A673 (cell line): ENCODE measurements at regions of chr1 and their contacts with region 1.

Region 1: GRCh38 chr1:51217101-51217500 is 19.0 kb upstream of the RNF11 start:
- DNase-seq: no peak
- H3K4me3 ChIP-seq: no peak overlapping the region
- H3K27ac ChIP-seq: no peak overlapping the region
- H3K4me1 ChIP-seq: no peaks in the 10 kb centered on the region
- H3K27me3 ChIP-seq: no peaks in the 10 kb centered on the region
- CTCF ChIP-seq: no peak

Region 2: GRCh38 chr1:50289495-50289894 is 927.6 kb before region 1 on chr1:
- CTCF ChIA-PET with region 1: no interaction called
- POLR2A ChIA-PET with region 1: no interaction called
- intact Hi-C with region 1: no loop called
- DNase-seq: no peak
- H3K4me3 ChIP-seq: no peak overlapping the region
- H3K27ac ChIP-seq: no peak overlapping the region
- H3K4me1 ChIP-seq: no peaks in the 10 kb centered on the region
- H3K27me3 ChIP-seq: no peaks in the 10 kb centered on the region
- CTCF ChIP-seq: no peak

Region 3: GRCh38 chr1:51175278-51175677 is 41.8 kb before region 1 on chr1:
- CTCF ChIA-PET with region 1: no interaction called
- POLR2A ChIA-PET with region 1: interaction called, 12 read pairs
- intact Hi-C with region 1: no loop called
- DNase-seq: no peak
- H3K4me3 ChIP-seq: no peak overlapping the region
- H3K27ac ChIP-seq: no peak overlapping the region
- H3K4me1 ChIP-seq: no peaks in the 10 kb centered on the region
- H3K27me3 ChIP-seq: no peaks in the 10 kb centered on the region
- CTCF ChIP-seq: no peak

Region 4: GRCh38 chr1:51192213-51192843 is 24.8 kb before region 1 on chr1:
- CTCF ChIA-PET with region 1: no interaction called
- POLR2A ChIA-PET with region 1: no interaction called
- intact Hi-C with region 1: no loop called
- DNase-seq: peak; percentile 80
- H3K4me3 ChIP-seq: no peak overlapping the region
- H3K27ac ChIP-seq: no peak overlapping the region
- H3K4me1 ChIP-seq: no peaks in the 10 kb centered on the region
- H3K27me3 ChIP-seq: no peaks in the 10 kb centered on the region
- CTCF ChIP-seq: peak; percentile 83

Region 5: DNA sequence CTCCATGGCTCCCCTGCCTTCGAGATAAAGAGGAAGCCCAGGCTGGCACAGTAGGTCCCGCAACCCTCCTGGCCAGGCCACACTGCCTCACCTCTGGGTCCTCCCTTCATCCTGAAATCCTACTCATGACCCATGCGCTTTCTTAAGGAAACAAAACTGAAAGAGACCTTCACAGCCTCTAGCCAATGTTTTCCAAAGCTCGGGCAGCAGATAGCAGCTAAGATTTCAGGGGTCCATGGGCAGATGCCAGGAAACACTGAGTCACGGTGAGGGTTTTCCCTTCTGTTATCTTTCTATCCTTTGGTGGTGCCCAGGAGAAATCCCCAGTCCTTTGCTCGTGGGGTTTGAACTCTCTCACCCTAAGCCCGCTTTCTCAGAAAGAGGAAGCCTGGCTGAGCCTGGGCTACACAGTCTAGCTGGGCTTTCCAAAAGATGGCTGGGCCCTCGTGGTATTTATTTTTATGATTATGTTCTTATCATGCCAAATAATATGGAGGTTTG is 86.7 kb after region 1 on chr1:
- CTCF ChIA-PET with region 1: no interaction called
- POLR2A ChIA-PET with region 1: no interaction called
- intact Hi-C with region 1: no loop called
- DNase-seq: no peak
- H3K4me3 ChIP-seq: no peak overlapping the region
- H3K27ac ChIP-seq: no peak overlapping the region
- H3K4me1 ChIP-seq: peaks cover 5% of the 10 kb centered on the region
- H3K27me3 ChIP-seq: no peaks in the 10 kb centered on the region
- CTCF ChIP-seq: no peak